ENCODE measurements at regions of chr4 and their contacts with region 1.

Region 1: GRCh38 chr4:54228056-54228527 is 1.0 kb upstream of the PDGFRA start:
- DNase-seq: peak; percentile 91
- ATAC-seq: peak; percentile 38
- H3K4me3 Mint-ChIP-seq: peak overlapping the region; percentile 82
- H3K27ac Mint-ChIP-seq: no peak overlapping the region
- H3K4me1 Mint-ChIP-seq: peaks cover 50% of the 10 kb centered on the region
- H3K27me3 Mint-ChIP-seq: peaks cover 97% of the 10 kb centered on the region
- CTCF ChIP-seq: peak; percentile 60

Region 2: GRCh38 chr4:53908661-53909078 is 319.4 kb before region 1 on chr4:
- CTCF ChIA-PET with region 1: interaction called, 111 read pairs
- POLR2A ChIA-PET with region 1: no interaction called
- DNase-seq: no peak
- ATAC-seq: peak; percentile 74
- H3K4me3 Mint-ChIP-seq: no peak overlapping the region
- H3K27ac Mint-ChIP-seq: no peak overlapping the region
- H3K4me1 Mint-ChIP-seq: peaks cover 20% of the 10 kb centered on the region
- H3K27me3 Mint-ChIP-seq: peaks cover 27% of the 10 kb centered on the region
- CTCF ChIP-seq: peak; percentile 47; the same call in 1 of the 2 replicates

Region 3: DNA sequence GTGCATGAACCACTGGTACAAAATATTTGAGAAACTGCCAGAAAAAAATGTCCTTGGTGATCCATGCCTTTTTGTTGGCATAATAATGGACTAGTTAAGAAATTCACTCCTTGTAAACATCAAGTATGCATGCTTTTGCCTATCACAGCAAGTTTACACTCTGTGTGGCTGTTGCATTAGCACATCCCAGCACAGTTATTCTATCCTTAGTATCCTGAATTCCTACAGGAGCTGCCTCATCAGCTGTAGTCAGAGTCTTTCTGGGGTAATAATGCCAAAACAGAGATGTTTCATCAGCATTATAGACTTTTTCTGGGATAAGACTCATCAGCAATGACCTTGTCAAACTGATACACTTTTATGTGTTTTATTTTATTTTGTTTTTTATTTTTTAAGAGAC is 246.5 kb before region 1 on chr4:
- CTCF ChIA-PET with region 1: no interaction called
- POLR2A ChIA-PET with region 1: no interaction called
- DNase-seq: no peak
- ATAC-seq: no peak
- H3K4me3 Mint-ChIP-seq: no peak overlapping the region
- H3K27ac Mint-ChIP-seq: no peak overlapping the region
- H3K4me1 Mint-ChIP-seq: peaks cover 2% of the 10 kb centered on the region
- H3K27me3 Mint-ChIP-seq: no peaks in the 10 kb centered on the region; the same call in 1 of the 2 replicates
- CTCF ChIP-seq: no peak

Region 4: DNA sequence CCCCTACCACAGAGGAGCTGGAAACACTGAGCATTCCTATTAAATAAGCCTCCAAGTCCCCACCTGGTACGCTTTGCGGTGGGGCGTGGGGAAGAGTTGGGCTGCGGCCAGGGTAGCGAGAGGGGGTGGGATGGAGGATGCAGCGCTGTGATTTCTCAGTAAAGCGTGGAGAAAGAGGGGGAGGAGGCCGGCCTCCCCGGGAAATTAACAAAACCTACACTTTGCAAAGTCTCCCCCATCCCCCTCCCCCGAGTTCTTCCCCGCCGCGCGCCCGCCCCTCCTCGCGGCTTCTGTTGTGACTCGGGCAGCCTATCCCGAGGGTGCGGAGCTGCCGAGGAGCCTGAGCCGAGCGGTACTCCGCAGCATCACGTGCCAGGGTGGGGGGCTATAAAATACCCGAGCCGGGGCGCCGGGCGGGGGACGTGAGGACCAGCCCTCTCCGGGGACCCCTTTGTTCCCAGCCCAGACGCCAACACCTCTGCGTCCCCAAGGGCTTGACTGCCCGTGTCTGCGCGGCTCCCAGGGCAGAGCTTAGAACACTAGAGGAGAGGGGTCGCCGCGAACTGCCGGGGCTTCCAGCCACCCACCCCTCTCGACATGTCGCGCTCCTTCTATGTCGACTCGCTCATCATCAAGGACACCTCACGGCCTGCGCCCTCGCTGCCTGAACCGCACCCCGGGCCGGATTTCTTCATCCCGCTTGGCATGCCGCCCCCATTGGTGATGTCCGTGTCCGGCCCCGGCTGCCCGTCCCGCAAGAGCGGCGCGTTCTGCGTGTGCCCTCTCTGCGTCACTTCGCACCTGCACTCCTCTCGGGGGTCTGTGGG is 128.1 kb before region 1 on chr4 and contains the start of gene GSX2:
- CTCF ChIA-PET with region 1: interaction called, 20 read pairs
- POLR2A ChIA-PET with region 1: interaction called, 3 read pairs
- DNase-seq: peak; percentile 40
- ATAC-seq: peak; percentile 4
- H3K4me3 Mint-ChIP-seq: peak within 1 kb of the TSS; percentile 68
- H3K27ac Mint-ChIP-seq: no peak within 1 kb of the TSS
- H3K4me1 Mint-ChIP-seq: peaks cover 81% of the 10 kb centered on the region
- H3K27me3 Mint-ChIP-seq: peaks cover 100% of the 10 kb centered on the region
- CTCF ChIP-seq: no peak
- total RNA-seq, gene GSX2: not detected in 3 replicates